ENCODE measurements at regions of chr6 and their contacts with region 1.

Region 1: GRCh38 chr6:128807577-128807976 is 75.4 kb upstream of the LAMA2 start:
- DNase-seq: no peak
- ATAC-seq: no peak
- H3K4me3 ChIP-seq: no peak overlapping the region
- H3K27ac ChIP-seq: no peak overlapping the region
- H3K4me1 ChIP-seq: no peaks in the 10 kb centered on the region
- H3K27me3 ChIP-seq: no peaks in the 10 kb centered on the region

Region 2: GRCh38 chr6:129251669-129252376 is 444.2 kb after region 1 on chr6:
- intact Hi-C with region 1: loop called in 1 of 4 experiments (anchors 10 kb)
- DNase-seq: no peak
- ATAC-seq: peak; percentile 51 to 52
- H3K4me3 ChIP-seq: no peak overlapping the region
- H3K27ac ChIP-seq: no peak overlapping the region
- H3K4me1 ChIP-seq: peaks cover 2% of the 10 kb centered on the region
- H3K27me3 ChIP-seq: no peaks in the 10 kb centered on the region